Activated CD4-positive, alpha-beta T cell treated with anti-CD3 and anti-CD28 coated beads for 36 hours (primary cell): ENCODE measurements at regions of chr20 and their contacts with region 1.

Region 1: GRCh38 chr20:16821211-16822089 is 73.3 kb downstream of the OTOR start:
- DNase-seq: peak; percentile 45
- ATAC-seq: peak; percentile 57
- H3K4me3 Mint-ChIP-seq: no peak overlapping the region
- H3K27ac Mint-ChIP-seq: no peak overlapping the region
- H3K4me1 Mint-ChIP-seq: no peaks in the 10 kb centered on the region
- H3K27me3 Mint-ChIP-seq: peaks cover 14% of the 10 kb centered on the region

Region 2: GRCh38 chr20:16517946-16518783 is 303.3 kb before region 1 on chr20:
- CTCF ChIA-PET with region 1: interaction called, 4 read pairs
- POLR2A ChIA-PET with region 1: no interaction called
- intact Hi-C with region 1: loop called in 1 of 2 experiments (anchors 2 kb)
- DNase-seq: peak; percentile 48
- ATAC-seq: peak; percentile 58
- H3K4me3 Mint-ChIP-seq: no peak overlapping the region
- H3K27ac Mint-ChIP-seq: no peak overlapping the region
- H3K4me1 Mint-ChIP-seq: no peaks in the 10 kb centered on the region
- H3K27me3 Mint-ChIP-seq: no peaks in the 10 kb centered on the region

Region 3: GRCh38 chr20:16810216-16810615 is 11.2 kb before region 1 on chr20:
- CTCF ChIA-PET with region 1: interaction called, 59 read pairs
- POLR2A ChIA-PET with region 1: no interaction called
- intact Hi-C with region 1: no loop called
- DNase-seq: no peak
- ATAC-seq: no peak
- H3K4me3 Mint-ChIP-seq: no peak overlapping the region
- H3K27ac Mint-ChIP-seq: no peak overlapping the region
- H3K4me1 Mint-ChIP-seq: no peaks in the 10 kb centered on the region
- H3K27me3 Mint-ChIP-seq: peaks cover 21% of the 10 kb centered on the region

Region 4: GRCh38 chr20:16904750-16905149 is 83.3 kb after region 1 on chr20:
- CTCF ChIA-PET with region 1: no interaction called
- POLR2A ChIA-PET with region 1: no interaction called
- intact Hi-C with region 1: no loop called
- DNase-seq: no peak
- ATAC-seq: no peak
- H3K4me3 Mint-ChIP-seq: no peak overlapping the region
- H3K27ac Mint-ChIP-seq: no peak overlapping the region
- H3K4me1 Mint-ChIP-seq: no peaks in the 10 kb centered on the region
- H3K27me3 Mint-ChIP-seq: no peaks in the 10 kb centered on the region

Region 5: DNA sequence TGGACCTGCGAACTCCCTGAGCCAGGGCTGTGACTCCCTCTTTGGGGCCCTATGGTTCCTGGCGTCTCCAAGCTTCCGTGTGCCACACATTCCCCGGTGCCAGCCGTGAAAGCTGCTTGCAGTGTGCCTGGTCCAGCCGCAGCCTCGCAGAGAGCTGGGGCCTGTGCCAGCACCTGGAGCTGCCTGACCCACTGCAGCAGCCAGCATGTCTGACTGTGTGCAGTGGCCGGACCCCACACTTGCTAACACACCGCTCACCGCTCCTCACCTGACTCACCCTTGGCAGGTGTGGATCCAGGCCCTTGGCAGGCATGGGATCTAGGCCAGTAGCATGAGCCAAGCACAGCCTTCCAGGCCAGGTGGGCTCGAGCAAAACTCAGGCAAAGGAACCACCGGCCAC is 154.2 kb after region 1 on chr20:
- CTCF ChIA-PET with region 1: no interaction called
- POLR2A ChIA-PET with region 1: no interaction called
- intact Hi-C with region 1: no loop called
- DNase-seq: no peak
- ATAC-seq: no peak
- H3K4me3 Mint-ChIP-seq: no peak overlapping the region
- H3K27ac Mint-ChIP-seq: no peak overlapping the region
- H3K4me1 Mint-ChIP-seq: no peaks in the 10 kb centered on the region
- H3K27me3 Mint-ChIP-seq: no peaks in the 10 kb centered on the region

Region 6: DNA sequence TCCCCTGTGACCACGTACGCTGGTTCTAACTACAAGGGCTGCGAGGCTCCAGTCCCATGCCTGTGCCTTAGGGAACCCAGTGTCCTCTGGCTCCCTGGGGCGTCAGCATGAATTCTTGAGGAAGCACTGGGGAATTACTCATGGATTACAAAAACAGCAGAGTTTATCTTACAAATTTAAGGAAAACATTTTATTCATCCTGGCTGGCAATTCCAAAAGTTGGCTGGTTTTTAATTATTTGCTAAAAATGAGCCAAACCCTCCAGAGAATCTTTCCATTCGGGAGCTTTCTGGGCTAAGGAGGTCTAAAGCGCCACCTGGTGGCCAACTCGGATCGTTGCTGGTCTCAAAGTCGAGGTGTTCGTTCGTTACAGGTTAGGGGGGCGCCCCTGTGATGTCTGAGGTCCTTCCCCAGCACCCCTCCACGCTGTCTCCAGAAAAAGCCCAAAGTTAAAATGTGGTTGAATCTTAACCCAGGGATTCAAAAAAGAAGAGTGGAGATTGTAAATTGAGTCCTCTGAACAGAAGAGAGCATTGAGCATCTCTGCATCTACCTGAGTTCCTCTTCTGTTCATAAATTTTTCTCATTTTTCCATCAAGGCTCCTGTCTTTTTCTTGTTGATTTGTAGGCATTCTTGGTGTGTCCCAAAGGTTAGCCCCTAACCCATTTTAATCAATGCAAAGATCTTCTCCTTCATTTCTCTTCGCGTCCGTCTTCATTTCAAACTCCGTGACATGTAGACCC is 610.3 kb after region 1 on chr20:
- CTCF ChIA-PET with region 1: interaction called, 6 read pairs
- POLR2A ChIA-PET with region 1: no interaction called
- intact Hi-C with region 1: loop called in 1 of 2 experiments (anchors 5 kb)
- DNase-seq: peak; percentile 72
- ATAC-seq: no peak
- H3K4me3 Mint-ChIP-seq: no peak overlapping the region
- H3K27ac Mint-ChIP-seq: no peak overlapping the region
- H3K4me1 Mint-ChIP-seq: no peaks in the 10 kb centered on the region
- H3K27me3 Mint-ChIP-seq: peaks cover 11% of the 10 kb centered on the region